ENCODE measurements at regions of chr12 and their contacts with region 1.

Region 1: GRCh38 chr12:53344824-53345485 is 8.8 kb upstream of the SP7 start:
- DNase-seq: peak; percentile 79 to 82 (median 80)
- H3K4me3 ChIP-seq: peak overlapping the region; percentile 45 to 91 (median 77)
- H3K27ac ChIP-seq: no peak overlapping the region
- H3K4me1 ChIP-seq: peaks cover 0 to 22% (median 17%) of the 10 kb centered on the region in 4 experiments
- H3K27me3 ChIP-seq: peaks cover 0 to 2% (median 0%) of the 10 kb centered on the region in 5 experiments

Region 2: GRCh38 chr12:53213348-53213747 is 131.6 kb before region 1 on chr12:
- CTCF ChIA-PET with region 1: interaction called, 35 read pairs
- POLR2A ChIA-PET with region 1: no interaction called
- DNase-seq: peak; percentile 78 to 86 (median 82)
- H3K4me3 ChIP-seq: no peak overlapping the region
- H3K27ac ChIP-seq: no peak overlapping the region
- H3K4me1 ChIP-seq: peaks cover 2 to 65% (median 55%) of the 10 kb centered on the region in 4 experiments
- H3K27me3 ChIP-seq: no peaks in the 10 kb centered on the region

Region 3: DNA sequence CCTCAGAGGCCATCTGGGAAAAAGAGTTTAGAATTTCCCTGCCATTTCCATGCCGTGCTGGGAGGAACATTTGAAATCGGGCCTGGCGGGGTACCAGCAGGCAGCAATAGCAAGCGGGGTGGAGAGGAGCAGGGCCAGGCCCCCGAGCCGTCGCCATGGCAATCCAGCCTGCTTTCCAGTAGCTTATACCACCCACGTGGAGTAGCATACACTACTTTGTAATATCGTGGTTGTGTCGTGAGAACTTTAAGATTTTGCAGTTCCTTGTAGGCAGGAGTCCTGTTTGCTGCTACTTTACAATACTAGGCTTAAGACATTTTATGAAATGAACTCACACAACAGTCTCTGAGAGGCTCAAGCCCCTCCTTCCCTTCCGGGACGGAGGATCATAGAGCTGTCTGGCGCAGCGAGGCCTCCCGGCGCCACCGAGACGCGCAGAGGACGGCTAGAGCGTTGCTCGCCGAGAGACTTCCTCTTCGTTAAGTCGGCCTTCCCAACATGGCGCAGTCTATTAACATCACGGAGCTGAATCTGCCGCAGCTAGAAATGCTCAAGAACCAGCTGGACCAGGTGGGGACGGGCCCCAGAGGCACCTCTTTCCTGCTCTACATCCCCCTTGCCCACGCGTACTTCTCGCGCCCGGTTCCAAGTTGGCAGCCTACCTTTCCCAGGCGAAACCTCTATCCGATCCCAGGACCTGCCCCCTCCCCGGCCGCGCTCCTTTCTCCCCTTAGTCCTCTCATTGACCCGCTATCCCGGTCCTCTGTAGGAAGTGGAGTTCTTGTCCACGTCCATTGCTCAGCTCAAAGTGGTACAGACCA is 49.7 kb before region 1 on chr12 and contains the start of gene PFDN5:
- CTCF ChIA-PET with region 1: interaction called, 10 read pairs
- POLR2A ChIA-PET with region 1: no interaction called
- DNase-seq: peak; percentile 94 to 95 (median 94)
- H3K4me3 ChIP-seq: peak within 1 kb of the TSS; percentile 83 to 96 (median 89)
- H3K27ac ChIP-seq: peak within 1 kb of the TSS; percentile 93 to 96
- H3K4me1 ChIP-seq: peaks cover 5 to 48% (median 42%) of the 10 kb centered on the region in 4 experiments
- H3K27me3 ChIP-seq: no peaks in the 10 kb centered on the region

Region 4: DNA sequence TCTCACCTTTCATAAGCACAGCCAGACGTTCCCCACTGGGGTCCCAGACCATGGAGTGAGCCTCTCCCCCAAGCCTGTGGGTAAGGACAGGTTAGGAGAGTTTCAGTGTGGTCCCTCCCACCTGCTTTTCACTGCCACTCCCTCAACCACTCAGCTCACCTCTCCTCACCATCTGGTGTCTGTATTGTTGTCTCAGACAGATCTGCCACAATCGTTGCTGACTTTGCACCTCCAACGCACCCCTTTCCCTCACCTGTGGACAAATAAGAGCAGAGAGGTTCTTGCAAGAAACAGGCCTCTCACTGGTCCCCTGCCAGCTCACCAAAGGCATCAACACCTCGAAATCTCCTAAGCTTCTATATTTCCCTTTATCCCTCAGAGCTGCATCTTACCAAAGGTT is 36.7 kb before region 1 on chr12:
- CTCF ChIA-PET with region 1: no interaction called
- POLR2A ChIA-PET with region 1: no interaction called
- DNase-seq: no peak
- H3K4me3 ChIP-seq: no peak overlapping the region
- H3K27ac ChIP-seq: peak overlapping the region in 1 of 2 experiments; percentile 3
- H3K4me1 ChIP-seq: no peaks in the 10 kb centered on the region
- H3K27me3 ChIP-seq: no peaks in the 10 kb centered on the region

Region 5: DNA sequence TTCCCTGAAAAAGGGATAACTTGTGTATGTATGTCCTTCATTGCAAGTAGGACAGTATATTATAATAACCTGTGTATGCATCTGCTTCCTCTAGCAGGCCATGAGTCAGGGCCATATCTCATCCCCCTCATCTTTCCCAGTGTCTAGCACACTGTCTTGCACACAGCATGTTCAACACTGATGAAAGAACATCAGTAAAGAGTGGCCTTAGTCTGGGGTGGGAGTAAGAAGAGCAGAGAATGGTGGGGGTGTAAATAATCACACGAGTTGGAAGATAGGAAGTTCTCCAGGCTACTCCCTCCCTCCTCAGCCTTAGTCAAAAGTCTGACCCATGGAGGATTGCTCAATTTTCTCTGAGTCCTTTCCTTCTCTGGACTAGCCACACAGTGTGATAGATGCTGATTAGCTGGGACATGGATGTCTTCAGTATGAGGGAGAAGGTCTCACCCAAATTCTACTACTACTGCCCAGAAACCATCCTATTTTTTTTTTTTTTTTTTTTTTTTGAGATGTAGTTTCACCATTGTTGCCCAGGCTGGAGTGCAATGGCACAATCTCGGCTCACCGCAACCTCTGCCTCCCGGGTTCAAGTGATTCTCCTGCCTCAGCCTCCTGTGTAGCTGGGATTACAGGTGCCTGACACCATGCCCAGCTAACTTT is 20.4 kb after region 1 on chr12:
- CTCF ChIA-PET with region 1: interaction called, 17 read pairs
- POLR2A ChIA-PET with region 1: no interaction called
- DNase-seq: peak in 2 of 3 donors; percentile 35 to 53
- H3K4me3 ChIP-seq: no peak overlapping the region
- H3K27ac ChIP-seq: peak overlapping the region in 1 of 2 experiments; percentile 75
- H3K4me1 ChIP-seq: peaks cover 5 to 30% (median 26%) of the 10 kb centered on the region in 4 experiments
- H3K27me3 ChIP-seq: no peaks in the 10 kb centered on the region

Region 6: DNA sequence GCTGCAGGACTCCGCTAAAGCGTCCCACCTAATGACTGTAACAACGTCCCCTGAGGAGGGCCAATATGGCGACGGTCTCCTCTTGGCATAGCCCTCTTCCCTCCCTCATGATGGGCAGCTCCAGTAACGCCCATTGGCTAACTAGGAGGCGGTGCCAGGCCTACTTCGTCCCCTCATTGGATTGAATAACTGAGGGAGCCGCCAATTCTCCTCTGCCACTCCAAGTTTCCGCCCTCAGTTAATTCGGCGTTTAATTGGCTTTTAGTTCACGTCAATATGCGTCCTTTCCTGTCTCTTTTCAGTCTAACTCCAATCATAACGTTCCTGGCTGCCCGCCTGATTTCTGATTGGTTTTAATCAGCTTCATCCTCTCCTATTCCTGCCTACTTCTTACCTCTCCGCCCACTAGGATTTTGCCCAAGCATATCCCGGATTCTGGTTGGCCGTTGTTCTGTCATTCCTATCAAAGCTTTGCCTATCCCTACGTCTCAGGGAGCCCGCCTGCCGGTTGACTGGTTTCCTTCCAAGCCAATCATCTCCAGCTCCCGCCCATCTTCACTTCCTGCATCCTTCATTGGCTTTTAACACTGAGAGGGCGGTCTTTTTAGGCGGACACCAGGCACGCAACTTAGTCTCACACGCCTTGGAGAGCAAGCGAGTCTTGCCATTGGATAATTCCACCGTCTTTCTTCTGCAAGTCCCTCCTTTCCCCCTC is 34.6 kb after region 1 on chr12:
- CTCF ChIA-PET with region 1: interaction called, 27 read pairs
- POLR2A ChIA-PET with region 1: interaction called, 4 read pairs
- DNase-seq: peak; percentile 100
- H3K4me3 ChIP-seq: peak overlapping the region; percentile 6 to 89 (median 70)
- H3K27ac ChIP-seq: peak overlapping the region; percentile 62 to 91
- H3K4me1 ChIP-seq: peaks cover 15 to 42% (median 37%) of the 10 kb centered on the region in 4 experiments
- H3K27me3 ChIP-seq: no peaks in the 10 kb centered on the region

Region 7: DNA sequence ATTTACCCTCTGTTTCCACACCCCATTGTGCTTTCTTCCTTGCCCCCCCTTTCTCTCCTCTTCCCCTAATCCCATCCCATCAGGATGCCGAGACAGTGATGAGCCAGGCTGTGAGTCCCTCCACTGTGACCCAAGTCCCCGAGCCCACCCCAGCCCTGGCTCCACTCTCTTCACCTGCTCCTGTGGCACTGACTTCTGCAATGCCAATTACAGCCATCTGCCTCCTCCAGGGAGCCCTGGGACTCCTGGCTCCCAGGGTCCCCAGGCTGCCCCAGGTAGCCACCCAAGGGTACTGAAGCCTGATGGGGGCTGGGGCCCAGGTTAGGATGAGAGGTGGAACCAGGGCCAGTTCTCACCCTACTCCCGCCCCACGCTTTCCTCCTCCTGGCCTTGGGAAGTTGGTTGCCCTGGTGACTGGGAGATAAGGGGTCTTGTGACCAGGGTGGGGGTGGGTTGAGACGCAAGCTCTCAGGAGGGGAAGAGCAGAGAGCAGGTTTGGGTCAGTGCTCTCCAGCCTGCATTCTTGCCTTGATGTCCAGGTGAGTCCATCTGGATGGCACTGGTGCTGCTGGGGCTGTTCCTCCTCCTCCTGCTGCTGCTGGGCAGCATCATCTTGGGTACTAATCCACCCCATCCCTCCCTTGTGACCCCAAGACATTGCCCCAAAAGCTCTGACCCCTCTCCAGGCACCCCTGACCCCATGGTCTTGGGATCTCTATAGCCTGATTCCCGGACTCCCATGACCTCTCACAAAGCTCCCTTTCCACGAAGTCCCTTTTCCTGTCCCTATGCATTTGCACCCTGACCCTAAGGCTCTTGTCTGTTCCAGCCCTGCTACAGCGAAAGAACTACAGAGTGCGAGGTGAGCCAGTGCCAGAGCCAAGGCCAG is 79.9 kb after region 1 on chr12:
- CTCF ChIA-PET with region 1: interaction called, 57 read pairs
- POLR2A ChIA-PET with region 1: interaction called, 3 read pairs
- DNase-seq: peak in 1 of 3 donors; percentile 18
- H3K4me3 ChIP-seq: no peak overlapping the region
- H3K27ac ChIP-seq: peak overlapping the region in 1 of 2 experiments; percentile 60
- H3K4me1 ChIP-seq: peaks cover 0 to 12% (median 6%) of the 10 kb centered on the region in 4 experiments
- H3K27me3 ChIP-seq: no peaks in the 10 kb centered on the region

Measured in common myeloid progenitor, CD34-positive (primary cell).